ENCODE measurements at regions of chr19 and their contacts with region 1.

Region 1: DNA sequence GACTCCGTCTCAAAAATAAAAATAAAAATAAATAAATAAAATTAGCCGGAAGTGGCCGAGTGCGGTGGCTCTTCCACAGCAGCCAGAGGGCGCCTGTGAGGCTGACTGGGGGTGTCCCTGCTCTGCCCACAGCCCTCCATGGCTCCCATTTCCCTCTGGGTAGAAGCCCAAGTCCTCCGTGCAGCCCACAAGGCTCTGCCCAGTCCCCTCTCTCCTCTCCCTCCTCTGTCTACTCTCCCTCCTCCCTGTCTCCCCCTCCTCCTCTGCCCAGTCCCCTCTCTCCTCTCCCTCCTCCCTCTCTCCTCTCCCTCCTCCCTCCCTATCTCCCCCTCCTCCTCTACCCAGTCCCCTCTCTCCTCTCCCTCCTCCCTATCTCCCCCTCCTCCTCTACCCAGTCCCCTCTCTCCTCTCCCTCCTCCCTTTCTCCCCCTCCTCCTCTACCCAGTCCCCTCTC is 20.4 kb downstream of the MISP start:
- DNase-seq: no peak
- ATAC-seq: peak; percentile 37

Region 2: GRCh38 chr19:633068-633785 is 138.1 kb before region 1 on chr19 and contains the start of gene POLRMT:
- intact Hi-C with region 1: no loop called
- DNase-seq: peak; percentile 99
- ATAC-seq: peak; percentile 98
- total RNA-seq, gene POLRMT: 54.5 TPM

Region 3: DNA sequence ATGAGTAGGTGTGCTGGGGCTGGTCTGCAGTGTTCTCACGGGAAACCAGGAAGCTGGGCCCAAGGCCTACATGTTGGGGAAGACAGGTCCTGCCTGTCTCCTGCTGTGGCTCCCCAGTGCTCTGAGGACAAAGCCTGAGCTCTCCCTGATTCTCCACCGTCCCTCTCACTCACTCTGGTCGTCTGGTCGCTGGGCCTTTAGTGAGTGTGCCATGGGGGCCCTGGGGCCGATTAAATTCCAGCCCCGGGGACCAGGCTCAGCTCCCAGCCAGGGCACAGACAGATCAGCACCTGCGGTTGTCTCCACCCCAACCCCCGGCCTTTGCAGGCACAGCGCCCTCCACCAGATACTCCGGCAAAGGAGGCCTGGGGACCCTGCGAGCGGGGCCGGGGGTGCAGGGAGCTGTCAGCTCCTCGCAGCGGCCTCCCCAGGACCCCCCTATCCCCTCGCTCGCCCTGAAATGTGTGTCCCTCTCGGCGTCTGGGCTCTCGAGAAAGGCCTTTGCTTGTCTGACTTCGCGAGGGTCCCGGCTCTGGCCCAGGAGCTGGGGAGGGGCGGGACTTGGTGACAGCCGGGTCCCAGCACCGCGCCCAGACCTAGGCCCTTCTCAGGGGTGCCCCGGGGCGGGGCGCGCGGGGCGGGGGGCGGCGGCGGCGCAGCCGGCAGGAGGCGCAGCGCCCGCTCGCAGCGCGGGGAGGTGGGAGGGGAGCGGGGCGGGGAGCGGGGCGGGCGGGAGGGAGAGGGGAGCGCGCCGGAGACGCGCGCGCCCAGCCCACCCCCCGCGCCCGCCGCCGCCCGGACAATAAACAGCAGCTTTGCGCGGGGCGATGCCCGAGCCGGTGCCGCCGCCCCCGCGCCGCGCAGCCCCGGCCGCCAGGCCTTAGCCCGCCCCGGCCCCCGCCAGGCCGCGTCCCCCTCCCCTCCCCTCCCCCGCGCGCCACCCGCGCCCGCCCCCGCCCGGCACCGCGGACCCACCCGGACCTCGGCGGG is 62.9 kb before region 1 on chr19 and contains the start of gene PALM:
- intact Hi-C with region 1: no loop called
- DNase-seq: peak; percentile 59
- ATAC-seq: peak; percentile 30
- total RNA-seq, gene PALM: 32.9 TPM

Region 4: GRCh38 chr19:860481-861101 is 89.2 kb after region 1 on chr19:
- intact Hi-C with region 1: loop called (anchors 10 kb)
- DNase-seq: peak; percentile 84
- ATAC-seq: peak; percentile 51

Region 5: GRCh38 chr19:917323-918151 is 146.2 kb after region 1 on chr19 and contains the start of gene KISS1R:
- intact Hi-C with region 1: loop called (anchors 2 kb)
- DNase-seq: no peak
- ATAC-seq: no peak
- total RNA-seq, gene KISS1R: not detected

Region 6: DNA sequence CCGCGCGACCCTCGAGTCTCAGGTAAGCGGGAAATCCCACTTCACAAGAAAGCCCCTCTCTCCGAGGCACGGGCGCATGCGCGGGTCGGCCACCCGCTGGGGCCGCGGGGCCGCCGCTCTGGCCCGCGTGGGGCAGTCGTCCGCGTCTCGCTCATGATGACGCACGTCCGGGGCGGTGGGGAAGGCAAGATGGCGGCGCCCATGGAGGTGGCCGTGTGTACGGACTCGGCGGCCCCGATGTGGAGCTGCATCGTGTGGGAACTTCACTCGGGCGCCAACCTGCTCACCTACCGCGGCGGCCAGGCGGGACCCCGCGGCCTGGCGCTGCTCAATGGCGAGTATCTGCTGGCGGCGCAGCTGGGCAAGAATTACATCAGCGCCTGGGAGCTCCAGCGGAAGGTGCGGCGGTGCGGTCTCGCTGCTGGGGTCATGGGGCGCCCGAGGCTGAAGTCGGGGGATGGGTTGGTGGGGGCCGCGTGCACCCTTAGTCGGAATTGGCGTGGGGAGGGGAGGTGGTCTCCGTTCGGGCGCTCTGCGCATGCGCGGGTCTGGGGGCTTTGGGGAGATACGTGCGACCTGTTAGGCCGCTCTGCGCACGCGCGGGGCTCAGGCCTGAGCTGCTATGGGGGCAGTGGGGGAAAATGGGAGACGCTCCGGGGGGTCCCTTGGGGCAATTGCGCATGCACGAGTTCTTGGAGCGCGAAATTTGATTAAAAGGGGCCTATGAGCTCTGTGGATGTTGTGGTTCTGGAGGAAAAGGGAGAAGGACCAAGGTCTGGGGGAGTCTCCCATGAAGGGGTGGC is 213.0 kb after region 1 on chr19 and contains the start of gene WDR18:
- intact Hi-C with region 1: loop called (anchors 10 kb)
- DNase-seq: peak; percentile 97
- ATAC-seq: peak; percentile 98
- total RNA-seq, gene WDR18: 18.6 TPM

Measured in Right ventricle myocardium superior (tissue), 1 donor.